Panc1 (cell line): ENCODE measurements at regions of chr20 and their contacts with region 1.

Region 1: DNA sequence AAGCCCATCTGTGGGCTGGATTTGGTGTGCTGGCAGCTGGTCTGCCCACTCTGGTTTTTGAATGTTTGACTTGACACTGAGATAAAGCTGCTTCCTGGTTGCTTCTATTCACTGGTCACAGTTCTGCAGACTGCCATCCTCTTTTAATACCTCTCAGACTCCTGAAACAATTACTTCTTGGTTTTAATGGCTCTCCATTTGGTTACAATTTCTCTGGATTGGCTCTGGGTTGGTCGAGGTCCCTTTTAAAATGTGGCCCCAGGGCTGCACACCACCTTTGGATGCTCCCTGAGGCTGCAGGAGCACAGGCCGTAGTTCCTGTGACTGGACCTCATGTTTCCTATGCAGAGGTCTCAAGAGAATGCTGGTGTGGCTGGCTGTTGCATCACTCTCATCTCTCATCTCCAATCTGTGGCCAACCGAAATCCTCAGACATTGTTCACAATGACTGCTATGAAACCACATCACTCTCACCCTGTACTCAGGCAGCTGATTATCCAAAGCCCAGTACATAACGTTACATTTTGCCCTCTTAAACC is 98.5 kb downstream of the INSM1 start:
- DNase-seq: no peak
- ATAC-seq: no peak
- H3K4me3 ChIP-seq: no peak overlapping the region
- H3K27ac ChIP-seq: no peak overlapping the region
- H3K4me1 ChIP-seq: no peaks in the 10 kb centered on the region
- H3K27me3 ChIP-seq: no peaks in the 10 kb centered on the region
- CTCF ChIP-seq: no peak

Region 2: GRCh38 chr20:20286061-20286460 is 180.3 kb before region 1 on chr20:
- CTCF ChIA-PET with region 1: no interaction called
- POLR2A ChIA-PET with region 1: interaction called, 14 read pairs
- in situ Hi-C with region 1: no loop called
- intact Hi-C with region 1: no loop called
- DNase-seq: no peak
- ATAC-seq: no peak
- H3K4me3 ChIP-seq: no peak overlapping the region
- H3K27ac ChIP-seq: no peak overlapping the region
- H3K4me1 ChIP-seq: no peaks in the 10 kb centered on the region
- H3K27me3 ChIP-seq: no peaks in the 10 kb centered on the region
- CTCF ChIP-seq: no peak